B cell (primary cell): ENCODE measurements at regions of chr17 and their contacts with region 1.

Region 1: GRCh38 chr17:62109378-62109902 is 44.4 kb upstream of the MED13 start:
- DNase-seq: peak; percentile 76
- ATAC-seq: peak; percentile 97
- H3K4me3 ChIP-seq: no peak overlapping the region
- H3K4me3 Mint-ChIP-seq: no peak overlapping the region
- H3K27ac ChIP-seq: no peak overlapping the region
- H3K27ac Mint-ChIP-seq: no peak overlapping the region
- H3K4me1 ChIP-seq: no peaks in the 10 kb centered on the region
- H3K4me1 Mint-ChIP-seq: no peaks in the 10 kb centered on the region
- H3K27me3 ChIP-seq: peaks cover 0 to 4% (median 0%) of the 10 kb centered on the region in 4 experiments
- H3K27me3 Mint-ChIP-seq: peaks cover 10% of the 10 kb centered on the region
- CTCF ChIP-seq: peak; percentile 74

Region 2: DNA sequence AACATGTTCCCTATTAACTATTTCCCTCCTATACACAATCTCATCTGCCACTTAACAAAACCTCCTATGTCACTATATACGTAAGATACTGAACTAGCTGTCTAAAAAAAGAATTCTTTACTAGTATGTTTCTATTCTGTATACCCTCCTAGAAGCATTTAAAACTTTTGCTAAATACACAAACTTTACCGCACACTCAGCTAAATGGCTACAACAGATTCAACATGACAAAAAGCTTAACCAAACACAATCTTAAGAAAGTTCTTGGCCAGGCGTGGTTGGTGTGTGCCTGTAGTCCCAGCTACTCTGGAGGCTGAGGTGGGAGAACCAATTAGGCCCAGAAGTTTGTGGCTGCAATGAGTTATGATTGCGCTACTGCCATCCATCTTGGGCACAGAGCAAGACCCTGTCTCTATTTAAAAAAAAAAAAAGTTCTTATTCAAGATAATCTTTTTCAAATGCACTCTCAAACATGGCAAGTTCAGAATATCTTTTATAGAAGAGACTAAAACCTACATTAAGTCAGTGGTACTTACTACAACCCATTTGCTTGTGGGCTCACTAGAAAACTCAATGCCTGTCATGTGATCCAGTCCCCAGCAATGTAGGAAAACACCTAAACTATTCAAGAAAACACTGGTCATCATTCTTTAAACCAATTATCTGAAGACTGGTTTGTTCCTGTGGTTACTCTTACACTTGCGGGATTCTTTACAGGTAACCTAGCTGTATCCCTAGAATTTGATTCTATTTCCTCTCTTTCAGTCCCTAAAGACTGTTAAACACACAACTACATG is 64.1 kb before region 1 on chr17:
- CTCF ChIA-PET with region 1: interaction called, 8 read pairs
- POLR2A ChIA-PET with region 1: no interaction called
- intact Hi-C with region 1: loop called (anchors 10 kb)
- DNase-seq: no peak
- ATAC-seq: no peak
- H3K4me3 ChIP-seq: no peak overlapping the region
- H3K4me3 Mint-ChIP-seq: no peak overlapping the region
- H3K27ac ChIP-seq: peak overlapping the region in 1 of 2 donors; percentile 2
- H3K27ac Mint-ChIP-seq: no peak overlapping the region
- H3K4me1 ChIP-seq: peaks cover 0 to 5% of the 10 kb centered on the region in 2 donors
- H3K4me1 Mint-ChIP-seq: peaks cover 33% of the 10 kb centered on the region
- H3K27me3 ChIP-seq: no peaks in the 10 kb centered on the region
- H3K27me3 Mint-ChIP-seq: no peaks in the 10 kb centered on the region
- CTCF ChIP-seq: no peak

Region 3: GRCh38 chr17:62059414-62059813 is 50.0 kb before region 1 on chr17:
- CTCF ChIA-PET with region 1: interaction called, 29 read pairs
- POLR2A ChIA-PET with region 1: no interaction called
- intact Hi-C with region 1: loop called (anchors 2 kb)
- DNase-seq: no peak
- ATAC-seq: no peak
- H3K4me3 ChIP-seq: no peak overlapping the region
- H3K4me3 Mint-ChIP-seq: no peak overlapping the region
- H3K27ac ChIP-seq: no peak overlapping the region
- H3K27ac Mint-ChIP-seq: no peak overlapping the region
- H3K4me1 ChIP-seq: peaks cover 12 to 28% of the 10 kb centered on the region in 2 donors
- H3K4me1 Mint-ChIP-seq: peaks cover 58% of the 10 kb centered on the region
- H3K27me3 ChIP-seq: no peaks in the 10 kb centered on the region
- H3K27me3 Mint-ChIP-seq: no peaks in the 10 kb centered on the region
- CTCF ChIP-seq: no peak

Region 4: DNA sequence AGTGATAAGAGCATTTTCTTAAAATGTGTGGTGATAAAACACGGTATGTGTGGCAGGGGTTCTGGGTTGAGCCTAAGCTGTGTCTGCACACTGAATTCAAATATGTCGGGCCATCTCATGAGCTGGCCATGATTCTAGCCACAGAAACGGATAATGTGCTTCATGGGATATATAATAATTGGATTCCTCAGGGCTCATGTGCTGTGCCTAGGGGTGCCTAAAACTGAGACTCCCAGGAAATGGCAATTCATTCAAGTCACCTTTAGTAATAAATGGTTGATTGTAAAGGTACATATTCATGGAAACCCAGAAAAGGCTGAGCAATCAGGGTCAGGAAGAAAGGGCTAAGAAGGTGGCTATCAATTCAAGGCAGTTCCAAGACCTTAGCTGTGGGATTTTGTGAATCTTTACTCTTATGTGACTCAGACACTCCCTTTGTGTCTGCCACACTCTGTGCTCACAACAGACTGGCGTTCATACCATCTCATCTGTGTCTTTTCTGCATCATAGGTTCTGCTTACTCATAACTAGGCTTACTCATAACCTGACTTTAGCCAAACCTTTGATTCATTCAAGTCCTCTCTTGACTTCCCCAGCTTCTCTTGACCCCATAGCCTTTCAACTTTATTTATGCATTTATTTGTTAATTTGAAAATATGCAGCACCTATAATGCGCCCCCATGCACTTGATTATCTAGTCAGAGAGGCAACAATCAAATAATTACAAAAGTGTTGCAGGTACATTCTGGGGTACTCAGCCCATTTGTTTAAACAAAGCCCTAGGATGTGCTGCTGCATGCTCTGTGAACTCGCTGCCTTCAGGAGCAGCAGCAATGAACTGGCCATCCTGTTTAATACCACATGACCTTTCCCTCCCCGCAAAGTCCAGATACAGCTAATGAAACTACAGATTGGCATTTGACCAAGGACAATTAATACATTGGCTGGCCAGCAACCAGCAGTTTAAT is 16.0 kb before region 1 on chr17:
- CTCF ChIA-PET with region 1: interaction called, 29 read pairs
- POLR2A ChIA-PET with region 1: no interaction called
- intact Hi-C with region 1: no loop called
- DNase-seq: no peak
- ATAC-seq: peak; percentile 43
- H3K4me3 ChIP-seq: no peak overlapping the region
- H3K4me3 Mint-ChIP-seq: no peak overlapping the region
- H3K27ac ChIP-seq: no peak overlapping the region
- H3K27ac Mint-ChIP-seq: no peak overlapping the region
- H3K4me1 ChIP-seq: peaks cover 10 to 14% of the 10 kb centered on the region in 2 donors
- H3K4me1 Mint-ChIP-seq: peaks cover 21% of the 10 kb centered on the region
- H3K27me3 ChIP-seq: no peaks in the 10 kb centered on the region
- H3K27me3 Mint-ChIP-seq: no peaks in the 10 kb centered on the region
- CTCF ChIP-seq: no peak

Region 5: DNA sequence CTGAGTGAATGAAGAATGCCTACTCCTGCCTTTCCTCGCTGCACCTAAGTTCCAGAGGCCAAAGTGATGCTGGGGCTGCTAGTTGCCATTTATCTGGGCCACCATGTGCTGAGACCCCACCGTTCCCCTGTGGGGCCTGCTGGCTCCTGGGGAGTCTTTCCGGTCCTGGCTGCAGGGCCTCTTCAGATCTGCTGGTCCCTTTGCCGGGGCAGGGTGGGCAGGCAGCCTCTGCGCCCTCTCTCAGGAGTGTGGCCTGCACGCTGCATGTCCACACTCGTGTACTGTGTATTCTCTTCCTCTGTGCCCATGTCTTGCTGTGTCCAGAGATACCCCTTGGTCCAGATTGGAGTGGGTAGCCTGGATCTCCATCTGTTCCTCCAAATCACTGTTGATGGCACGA is 107.4 kb after region 1 on chr17:
- CTCF ChIA-PET with region 1: no interaction called
- POLR2A ChIA-PET with region 1: no interaction called
- intact Hi-C with region 1: no loop called
- DNase-seq: no peak
- ATAC-seq: no peak
- H3K4me3 ChIP-seq: no peak overlapping the region
- H3K4me3 Mint-ChIP-seq: no peak overlapping the region
- H3K27ac ChIP-seq: no peak overlapping the region
- H3K27ac Mint-ChIP-seq: no peak overlapping the region
- H3K4me1 ChIP-seq: no peaks in the 10 kb centered on the region
- H3K4me1 Mint-ChIP-seq: no peaks in the 10 kb centered on the region
- H3K27me3 ChIP-seq: peaks cover 0 to 3% (median 1%) of the 10 kb centered on the region in 4 experiments
- H3K27me3 Mint-ChIP-seq: peaks cover 11% of the 10 kb centered on the region
- CTCF ChIP-seq: no peak